GM18951 (cell line): ENCODE measurements at regions of chr11 and their contacts with region 1.

Region 1: GRCh38 chr11:60615497-60615896 is 83.9 kb upstream of the MS4A8 start:
- POLR2A ChIP-seq: no peak

Region 2: GRCh38 chr11:60485986-60486385 is 129.5 kb before region 1 on chr11:
- in situ Hi-C with region 1: loop called (anchors 10 kb)
- POLR2A ChIP-seq: no peak